ENCODE measurements at regions of chr12 and their contacts with region 1.

Region 1: DNA sequence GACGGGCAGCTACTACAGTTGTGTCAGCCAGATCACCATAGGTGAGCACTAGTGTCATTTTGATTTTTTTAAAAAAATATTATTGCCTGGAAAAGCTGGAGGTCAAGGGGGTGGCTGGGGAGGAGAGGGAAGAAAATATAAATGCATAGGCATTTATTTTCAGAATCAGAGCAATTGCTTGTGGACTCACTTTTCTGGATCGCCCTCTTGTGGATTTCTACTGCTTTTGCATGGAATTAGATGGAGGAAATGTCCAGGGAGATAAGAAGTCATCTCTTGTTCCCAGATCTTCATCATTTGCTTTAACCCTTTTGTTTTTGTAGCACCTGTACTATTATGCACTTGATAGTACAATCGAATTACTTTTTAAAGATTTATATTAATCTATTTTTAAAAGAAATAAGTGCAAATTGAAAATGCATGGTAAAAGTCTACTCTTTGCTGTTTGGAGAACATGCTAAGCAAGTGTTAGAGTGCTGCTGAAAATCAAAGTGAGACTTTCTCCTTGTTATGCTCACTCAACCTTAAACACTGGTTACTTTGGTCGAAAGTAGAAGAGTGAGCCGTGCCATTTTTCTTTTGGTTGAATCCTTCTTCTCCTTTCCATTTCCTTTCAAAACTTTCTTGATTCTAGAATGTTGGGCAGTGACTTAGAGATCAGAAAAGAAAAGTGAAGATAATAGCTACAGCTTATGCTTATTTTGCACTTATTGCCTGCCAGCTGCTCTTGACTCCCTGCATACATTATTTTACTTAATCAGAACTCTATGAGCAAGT is 60.6 kb upstream of the ANO4 start:
- H3K4me3 Mint-ChIP-seq: no peak overlapping the region
- H3K27ac Mint-ChIP-seq: no peak overlapping the region
- H3K4me1 Mint-ChIP-seq: no peaks in the 10 kb centered on the region
- H3K27me3 Mint-ChIP-seq: peaks cover 22% of the 10 kb centered on the region

Region 2: DNA sequence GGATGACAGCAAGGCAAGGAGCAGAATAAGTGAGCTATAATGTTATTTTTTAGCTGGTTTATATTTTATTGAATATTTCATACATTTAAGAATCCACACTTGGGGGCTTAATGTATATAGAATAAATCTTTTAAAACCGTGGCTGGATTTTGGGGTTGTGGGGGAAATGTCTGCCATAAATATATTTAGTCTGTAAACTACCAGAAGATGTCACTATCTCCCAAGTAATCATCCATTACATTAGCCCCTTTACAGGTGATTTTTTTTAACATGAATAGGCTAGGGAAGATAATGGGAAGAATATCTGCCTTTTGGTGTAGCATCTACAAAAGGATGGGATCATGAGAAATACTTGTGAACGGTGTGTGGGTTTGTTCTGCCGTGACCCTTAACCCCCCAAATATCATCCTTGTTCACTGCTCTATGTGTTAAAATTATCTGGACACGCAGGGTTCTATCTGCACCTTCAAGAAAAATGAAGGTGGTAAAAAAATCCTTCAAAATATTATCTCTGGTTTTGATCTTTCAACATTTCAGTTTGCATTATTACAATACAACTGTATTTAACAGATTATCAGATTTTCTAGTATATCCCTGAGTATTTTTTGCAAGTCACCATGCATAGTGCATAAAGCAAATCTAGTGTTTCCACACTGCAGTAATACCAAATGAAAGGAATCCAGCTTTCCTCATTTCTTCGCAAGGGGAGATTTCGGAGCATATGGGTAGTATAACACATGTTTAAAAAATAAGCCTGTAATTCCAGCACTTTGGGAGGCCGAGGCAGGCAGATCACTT is 385.1 kb before region 1 on chr12:
- intact Hi-C with region 1: loop called (anchors 2 kb)
- H3K4me3 Mint-ChIP-seq: no peak overlapping the region
- H3K27ac Mint-ChIP-seq: no peak overlapping the region
- H3K4me1 Mint-ChIP-seq: no peaks in the 10 kb centered on the region
- H3K27me3 Mint-ChIP-seq: peaks cover 3% of the 10 kb centered on the region

Region 3: DNA sequence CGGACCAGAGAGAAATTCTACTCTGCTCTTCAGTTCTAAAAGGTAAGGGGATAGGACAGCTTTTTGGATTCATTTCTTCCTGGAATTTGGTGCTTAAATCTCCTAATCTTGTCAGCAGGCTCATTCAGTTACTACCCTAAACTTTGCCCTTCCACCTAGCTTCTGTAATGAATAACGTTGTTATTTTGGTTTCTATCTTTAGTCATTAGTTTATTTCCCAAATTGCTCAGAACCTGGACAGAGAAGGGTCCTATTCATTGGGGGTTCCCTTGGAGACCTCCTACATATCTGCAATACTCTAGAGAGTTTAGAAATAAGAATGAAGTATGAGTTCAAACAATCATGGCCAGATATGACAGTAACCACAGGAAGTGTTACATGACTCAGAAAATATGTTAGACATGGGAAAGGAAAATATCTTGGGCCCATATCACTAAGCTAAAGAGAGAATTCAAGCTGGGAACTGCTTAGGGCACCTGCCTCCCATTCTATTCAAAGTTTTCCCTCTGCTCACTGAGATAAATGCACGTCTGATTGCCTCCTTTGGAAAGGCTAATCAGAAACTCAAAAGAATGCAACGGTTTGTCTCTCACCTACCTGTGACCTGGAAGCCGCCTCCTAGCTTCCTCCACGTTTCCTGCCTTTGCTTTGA is 72.6 kb before region 1 on chr12:
- intact Hi-C with region 1: no loop called
- H3K4me3 Mint-ChIP-seq: no peak overlapping the region
- H3K27ac Mint-ChIP-seq: no peak overlapping the region
- H3K4me1 Mint-ChIP-seq: peaks cover 7% of the 10 kb centered on the region
- H3K27me3 Mint-ChIP-seq: peaks cover 11% of the 10 kb centered on the region

Region 4: GRCh38 chr12:100752841-100753240 is 18.8 kb after region 1 on chr12:
- intact Hi-C with region 1: no loop called
- H3K4me3 Mint-ChIP-seq: no peak overlapping the region
- H3K27ac Mint-ChIP-seq: no peak overlapping the region
- H3K4me1 Mint-ChIP-seq: no peaks in the 10 kb centered on the region
- H3K27me3 Mint-ChIP-seq: no peaks in the 10 kb centered on the region

Measured in dendritic cell treated with granulocyte-macrophage colony-stimulating factor and Interleukin-4, amounts not matched to agents 40 ng/mL and 50 ng/mL, for 4 days (primary cell).